ENCODE measurements at regions of chr2 and their contacts with region 1.

Region 1: DNA sequence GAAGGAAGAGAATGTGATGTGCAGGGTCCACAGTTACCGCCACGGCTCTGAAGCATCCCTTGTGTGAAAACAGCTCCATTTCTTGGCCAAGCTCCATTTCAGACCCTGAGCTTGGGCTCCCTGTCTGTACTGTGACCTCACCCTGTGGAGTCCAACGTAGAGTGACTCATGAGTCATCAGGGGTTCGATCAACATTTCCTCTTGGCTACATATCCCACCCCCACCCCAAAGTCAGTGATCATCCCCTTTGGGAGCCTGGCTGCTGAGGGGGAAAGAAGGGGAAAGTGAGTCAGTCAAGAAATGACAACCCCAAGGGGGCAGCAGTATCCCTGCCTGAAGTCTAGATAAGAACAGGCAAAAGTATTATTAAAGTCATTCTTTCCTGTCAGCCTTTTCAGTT is 62.2 kb downstream of the PAPOLG start:
- DNase-seq: peak; percentile 85
- ATAC-seq: peak; percentile 44
- H3K4me3 Mint-ChIP-seq: peak overlapping the region; percentile 36
- H3K27ac Mint-ChIP-seq: peak overlapping the region; percentile 99
- H3K4me1 Mint-ChIP-seq: peaks cover 50% of the 10 kb centered on the region
- H3K27me3 Mint-ChIP-seq: no peaks in the 10 kb centered on the region
- CTCF ChIP-seq: peak; percentile 42

Region 2: GRCh38 chr2:60504049-60504448 is 314.2 kb before region 1 on chr2:
- CTCF ChIA-PET with region 1: no interaction called
- POLR2A ChIA-PET with region 1: no interaction called
- intact Hi-C with region 1: no loop called
- DNase-seq: no peak
- ATAC-seq: no peak
- H3K4me3 Mint-ChIP-seq: no peak overlapping the region
- H3K27ac Mint-ChIP-seq: no peak overlapping the region
- H3K4me1 Mint-ChIP-seq: no peaks in the 10 kb centered on the region
- H3K27me3 Mint-ChIP-seq: peaks cover 6% of the 10 kb centered on the region
- CTCF ChIP-seq: no peak

Region 3: GRCh38 chr2:60899230-60899891 is 81.1 kb after region 1 on chr2:
- CTCF ChIA-PET with region 1: interaction called, 3 read pairs
- POLR2A ChIA-PET with region 1: interaction called, 3 read pairs
- intact Hi-C with region 1: loop called (anchors 5 kb)
- DNase-seq: peak; percentile 82
- ATAC-seq: peak; percentile 82
- H3K4me3 Mint-ChIP-seq: peak overlapping the region; percentile 56
- H3K27ac Mint-ChIP-seq: peak overlapping the region; percentile 94
- H3K4me1 Mint-ChIP-seq: peaks cover 56% of the 10 kb centered on the region
- H3K27me3 Mint-ChIP-seq: no peaks in the 10 kb centered on the region
- CTCF ChIP-seq: no peak